Heart right ventricle (tissue), 16 donors: ENCODE measurements at regions of chrX and their contacts with region 1.

Region 1: GRCh38 chrX:109624641-109625616 is at the start of gene KCNE5:
- DNase-seq: peak in 1 of 2 donors; percentile 23
- ATAC-seq: peak in 5 of 8 donors; percentile 11 to 51 (median 33)
- H3K4me3 ChIP-seq: peak within 1 kb of the TSS in 9 of 10 donors; percentile 3 to 41 (median 27)
- H3K27ac ChIP-seq: no peak within 1 kb of the TSS
- H3K4me1 ChIP-seq: no peaks in the 10 kb centered on the region
- H3K27me3 ChIP-seq: peaks cover 0 to 31% (median 0%) of the 10 kb centered on the region in 7 donors
- CTCF ChIP-seq: no peak
- total RNA-seq, gene KCNE5: 0.20 to 0.67 (median 0.26) TPM in 8 of 10 donors, not detected in the others

Region 2: DNA sequence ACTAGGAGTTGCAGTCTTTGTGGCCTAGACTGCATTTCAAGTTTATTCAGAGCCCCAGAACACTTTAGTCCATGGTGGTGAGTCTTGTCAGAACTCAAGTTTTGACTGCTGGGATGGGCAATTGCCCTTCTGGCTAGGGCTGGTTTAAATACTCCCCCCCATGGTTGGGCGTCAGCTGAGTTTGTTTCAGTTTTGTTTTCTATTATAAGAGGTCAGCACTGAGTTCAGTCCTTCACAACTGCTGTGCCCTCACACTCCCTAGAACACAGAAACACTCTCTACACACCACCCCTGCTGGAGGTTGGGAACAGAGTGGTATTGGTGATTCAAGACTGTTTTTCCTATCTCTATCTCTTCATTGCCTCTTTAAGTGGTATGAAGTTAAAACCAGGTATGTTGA is 360.1 kb before region 1 on chrX:
- intact Hi-C with region 1: no loop called
- DNase-seq: no peak
- ATAC-seq: no peak
- H3K4me3 ChIP-seq: no peak overlapping the region
- H3K27ac ChIP-seq: no peak overlapping the region
- H3K4me1 ChIP-seq: no peaks in the 10 kb centered on the region
- H3K27me3 ChIP-seq: peaks cover 0 to 18% (median 0%) of the 10 kb centered on the region in 7 donors
- CTCF ChIP-seq: no peak

Region 3: DNA sequence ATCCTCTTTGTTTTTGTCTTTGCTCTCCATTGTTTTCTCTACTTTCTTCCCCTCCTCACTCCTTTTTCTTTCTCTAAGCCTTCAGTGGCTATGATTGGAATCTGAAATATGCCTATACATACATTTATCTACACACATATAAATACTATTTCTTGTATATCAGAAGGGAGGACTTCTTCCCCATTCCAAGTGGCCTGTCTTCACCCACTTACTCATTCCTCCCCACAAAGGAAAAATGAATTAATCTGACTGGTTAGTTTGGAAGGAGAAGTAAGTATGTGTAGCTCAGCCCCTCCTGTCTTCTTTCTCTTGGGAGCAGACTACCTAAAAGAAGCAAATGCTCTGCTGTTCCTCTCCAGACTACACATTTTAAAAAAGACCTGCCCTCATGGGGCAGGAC is 160.7 kb before region 1 on chrX:
- intact Hi-C with region 1: no loop called
- DNase-seq: no peak
- ATAC-seq: no peak
- H3K4me3 ChIP-seq: no peak overlapping the region
- H3K27ac ChIP-seq: no peak overlapping the region
- H3K4me1 ChIP-seq: no peaks in the 10 kb centered on the region
- H3K27me3 ChIP-seq: peaks cover 0 to 63% (median 0%) of the 10 kb centered on the region in 7 donors
- CTCF ChIP-seq: no peak

Region 4: GRCh38 chrX:109536439-109537336 is 88.2 kb before region 1 on chrX and contains the start of gene NXT2:
- intact Hi-C with region 1: loop called in 1 of 10 experiments (anchors 5 kb)
- DNase-seq: peak; percentile 87 to 91
- ATAC-seq: peak; percentile 100
- H3K4me3 ChIP-seq: peak within 1 kb of the TSS; percentile 23 to 75 (median 62)
- H3K27ac ChIP-seq: peak within 1 kb of the TSS; percentile 81 to 95 (median 90)
- H3K4me1 ChIP-seq: peaks cover 0 to 16% (median 4%) of the 10 kb centered on the region in 9 donors
- H3K27me3 ChIP-seq: peaks cover 0 to 11% (median 0%) of the 10 kb centered on the region in 7 donors
- CTCF ChIP-seq: no peak
- total RNA-seq, gene NXT2: 1.2 to 2.7 (median 1.6) TPM